Heart right ventricle (tissue), 16 donors: ENCODE measurements at regions of chr4 and their contacts with region 1.

Region 1: DNA sequence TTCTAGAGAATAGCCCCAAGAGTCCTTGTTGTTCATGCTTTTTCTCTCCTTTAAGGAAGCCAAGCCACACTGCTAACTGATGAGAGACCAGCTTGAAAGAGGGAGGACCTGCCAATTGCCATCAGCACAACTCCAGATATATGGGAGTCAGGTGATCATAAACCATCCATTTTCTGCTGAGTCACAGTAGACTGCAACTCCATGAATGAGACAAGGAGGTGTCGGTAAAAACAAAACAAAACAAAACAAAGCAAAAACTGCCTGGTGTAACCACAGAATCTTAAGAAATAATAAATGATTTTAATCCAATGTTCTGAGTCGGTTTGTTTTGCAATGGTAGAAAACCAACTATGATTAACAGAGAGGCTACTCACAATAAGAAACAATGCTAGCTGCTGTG is 837.3 kb downstream of the PCDH7 start:
- DNase-seq: no peak
- ATAC-seq: no peak
- H3K4me3 ChIP-seq: no peak overlapping the region
- H3K27ac ChIP-seq: no peak overlapping the region
- H3K4me1 ChIP-seq: no peaks in the 10 kb centered on the region
- H3K27me3 ChIP-seq: no peaks in the 10 kb centered on the region
- CTCF ChIP-seq: no peak

Region 2: DNA sequence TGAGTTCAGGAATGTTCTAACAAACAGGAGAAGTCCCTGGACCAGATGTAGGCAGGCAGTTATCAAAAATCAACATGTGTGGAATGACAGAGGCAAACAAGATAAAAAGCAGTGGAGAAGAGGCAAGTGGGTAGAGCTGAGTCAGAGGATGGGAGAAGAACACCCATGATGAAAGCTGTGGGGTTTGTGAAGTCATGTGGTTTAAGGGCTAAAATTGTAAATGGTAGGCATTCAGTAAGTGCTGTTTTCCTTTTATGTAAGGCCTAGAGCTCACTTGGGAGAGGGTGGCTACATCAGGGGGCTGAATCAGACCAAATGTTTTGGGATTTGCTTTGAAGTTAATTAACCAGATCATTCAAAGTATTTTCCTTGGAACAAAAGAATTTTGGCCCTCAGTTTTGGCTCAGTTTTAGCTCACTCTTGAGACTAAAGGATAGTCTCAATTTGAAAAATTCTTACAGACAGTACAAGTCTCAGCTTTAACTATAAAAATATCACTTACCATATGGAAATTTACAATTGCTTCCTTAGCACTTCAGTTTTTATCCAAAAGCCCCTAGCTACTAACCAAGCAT is 951.7 kb before region 1 on chr4:
- intact Hi-C with region 1: loop called in 1 of 10 experiments (anchors 5 kb)
- DNase-seq: no peak
- ATAC-seq: peak in 2 of 8 donors; percentile 26 to 51
- H3K4me3 ChIP-seq: no peak overlapping the region
- H3K27ac ChIP-seq: no peak overlapping the region
- H3K4me1 ChIP-seq: no peaks in the 10 kb centered on the region
- H3K27me3 ChIP-seq: no peaks in the 10 kb centered on the region
- CTCF ChIP-seq: no peak